ENCODE measurements at regions of chr12 and their contacts with region 1.

Region 1: DNA sequence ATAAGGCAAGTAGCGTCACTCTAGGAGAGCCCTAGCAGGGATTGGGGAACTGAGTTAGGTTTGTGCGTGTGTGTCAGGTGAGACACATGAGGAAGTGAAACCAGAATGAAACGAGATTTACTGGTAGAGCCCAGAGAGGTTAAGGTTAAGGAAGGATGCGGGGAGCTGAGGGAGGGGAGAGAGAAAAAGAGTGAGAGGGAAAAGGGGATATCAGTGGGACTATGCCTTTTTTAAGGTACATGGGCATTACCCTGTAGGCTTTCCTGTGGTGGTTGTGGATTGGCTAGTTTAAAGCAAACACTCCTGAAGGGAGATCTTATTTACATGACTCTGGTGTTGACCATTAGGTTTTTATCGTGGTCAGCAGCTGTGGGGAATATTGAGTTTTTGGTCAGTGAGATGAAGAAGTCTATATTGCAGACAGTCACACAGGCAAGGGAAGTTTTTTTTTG is 13.9 kb downstream of the ZDHHC17 start:
- DNase-seq: no peak
- ATAC-seq: peak; percentile 99
- H3K4me3 Mint-ChIP-seq: peak overlapping the region; percentile 24
- H3K27ac Mint-ChIP-seq: peak overlapping the region; percentile 79
- H3K4me1 Mint-ChIP-seq: peaks cover 60% of the 10 kb centered on the region
- H3K27me3 Mint-ChIP-seq: no peaks in the 10 kb centered on the region
- CTCF ChIP-seq: no peak

Region 2: DNA sequence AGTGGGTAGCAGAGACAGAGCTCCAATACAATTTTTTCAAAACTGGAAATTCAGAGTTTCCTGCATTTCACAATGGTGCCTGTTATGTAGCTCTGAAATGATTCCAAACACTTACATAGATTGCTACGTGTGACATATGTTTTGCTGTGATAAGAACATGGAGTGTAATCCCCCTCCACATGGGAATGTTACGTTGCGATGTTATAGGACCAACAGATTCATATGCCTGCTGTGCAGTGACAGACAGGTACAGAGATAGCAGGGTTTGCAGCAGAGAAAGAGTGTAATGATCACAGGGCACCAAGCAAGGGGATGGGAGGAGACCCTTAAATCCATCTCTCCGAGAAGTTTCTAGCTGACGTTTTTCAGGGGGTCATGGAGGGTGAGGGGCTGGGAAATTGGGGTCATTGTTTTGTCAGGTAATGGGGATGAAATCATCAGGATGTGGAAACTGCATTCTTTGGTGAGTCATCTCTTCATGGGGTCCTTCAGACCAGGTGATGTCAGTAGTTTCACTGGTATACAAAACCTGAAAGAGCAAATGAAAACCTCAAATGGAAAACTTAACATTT is 141.6 kb before region 1 on chr12:
- CTCF ChIA-PET with region 1: no interaction called
- POLR2A ChIA-PET with region 1: no interaction called
- intact Hi-C with region 1: no loop called
- DNase-seq: no peak
- ATAC-seq: no peak
- H3K4me3 Mint-ChIP-seq: no peak overlapping the region
- H3K27ac Mint-ChIP-seq: no peak overlapping the region
- H3K4me1 Mint-ChIP-seq: no peaks in the 10 kb centered on the region
- H3K27me3 Mint-ChIP-seq: peaks cover 2% of the 10 kb centered on the region
- CTCF ChIP-seq: no peak

Region 3: DNA sequence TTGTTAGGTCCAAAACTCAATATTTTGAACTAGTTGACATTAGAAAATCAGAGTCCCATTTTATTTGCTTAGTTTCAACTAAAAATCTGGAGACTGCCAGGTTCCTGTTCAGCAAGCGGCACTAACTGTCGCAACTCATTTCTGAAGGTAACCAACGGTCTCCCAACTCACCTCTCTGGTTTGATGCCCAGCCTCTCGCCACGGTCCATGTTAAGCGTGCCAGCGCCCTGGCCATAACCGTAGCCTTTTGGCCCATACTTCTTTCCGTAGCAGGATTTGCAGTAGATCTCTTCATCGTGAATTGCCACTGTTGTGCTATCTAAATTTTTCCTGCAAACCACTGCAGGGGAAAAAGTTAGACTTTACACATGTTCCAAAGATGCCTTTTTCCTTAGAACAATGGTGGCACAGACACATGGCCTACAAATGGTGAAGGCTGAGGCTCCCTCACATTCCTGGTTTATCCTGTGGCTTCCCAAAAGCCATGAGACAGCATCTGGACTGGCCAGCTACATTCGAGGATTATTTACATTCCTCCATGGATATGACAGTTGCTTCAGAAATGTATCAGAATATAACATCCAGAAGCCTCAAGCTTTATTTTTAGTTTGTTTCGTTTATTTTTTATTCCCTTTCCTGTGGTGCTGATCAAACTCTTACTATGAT is 85.3 kb after region 1 on chr12:
- CTCF ChIA-PET with region 1: no interaction called
- POLR2A ChIA-PET with region 1: no interaction called
- intact Hi-C with region 1: no loop called
- DNase-seq: no peak
- ATAC-seq: no peak
- H3K4me3 Mint-ChIP-seq: no peak overlapping the region
- H3K27ac Mint-ChIP-seq: no peak overlapping the region
- H3K4me1 Mint-ChIP-seq: peaks cover 7% of the 10 kb centered on the region
- H3K27me3 Mint-ChIP-seq: no peaks in the 10 kb centered on the region
- CTCF ChIP-seq: no peak

Region 4: DNA sequence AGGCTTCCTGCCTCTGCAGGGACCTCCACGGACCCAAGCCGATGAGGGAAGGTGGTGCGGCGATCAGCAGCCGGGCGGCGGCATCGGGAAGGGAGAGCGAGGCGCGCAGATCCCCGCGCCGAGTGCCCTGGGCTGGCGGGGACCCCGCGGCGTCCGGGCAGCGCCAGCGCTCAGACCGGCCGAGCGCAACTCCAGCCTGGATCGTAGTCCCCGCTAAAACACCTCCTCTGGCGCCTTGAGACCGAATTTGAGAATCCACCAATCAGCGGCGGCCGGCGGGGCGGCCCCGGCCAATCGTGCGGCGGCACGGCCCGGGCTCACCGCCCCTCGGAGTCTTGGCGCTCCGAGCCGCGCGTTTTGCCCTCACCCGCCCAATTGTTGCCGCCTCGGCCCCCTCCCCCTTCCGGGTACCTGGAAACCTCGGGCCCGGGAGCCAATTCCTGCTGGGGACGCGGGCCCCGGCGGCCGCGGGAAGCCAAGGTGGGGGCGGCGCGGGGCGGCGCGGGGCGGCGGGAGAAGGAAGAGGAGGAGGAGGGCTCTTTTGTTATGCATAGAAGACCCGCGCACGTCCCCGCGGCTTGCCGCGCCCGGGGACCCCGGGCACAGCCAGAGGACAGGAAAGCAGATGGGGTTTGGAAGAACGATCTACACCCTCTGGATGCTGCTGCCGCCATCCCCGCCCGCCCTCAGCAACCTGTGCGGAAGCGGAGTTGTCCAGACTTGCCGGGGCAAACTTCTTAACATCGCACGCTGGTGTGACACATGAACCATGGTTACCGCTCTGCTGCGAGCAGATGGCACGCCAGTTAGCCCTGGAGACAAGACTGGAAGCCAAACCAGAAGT is 287.8 kb after region 1 on chr12 and contains the start of gene E2F7:
- CTCF ChIA-PET with region 1: no interaction called
- POLR2A ChIA-PET with region 1: no interaction called
- intact Hi-C with region 1: loop called (anchors 5 kb)
- DNase-seq: peak; percentile 81
- ATAC-seq: peak; percentile 86
- H3K4me3 Mint-ChIP-seq: peak within 1 kb of the TSS; percentile 90
- H3K27ac Mint-ChIP-seq: no peak within 1 kb of the TSS
- H3K4me1 Mint-ChIP-seq: peaks cover 36% of the 10 kb centered on the region
- H3K27me3 Mint-ChIP-seq: peaks cover 5% of the 10 kb centered on the region
- CTCF ChIP-seq: no peak
- total RNA-seq, gene E2F7: 0.71 and 0.95 TPM in 2 replicates